ENCODE measurements at regions of chr11 and their contacts with region 1.

Region 1: GRCh38 chr11:6377902-6378639 is 12.2 kb upstream of the SMPD1 start:
- DNase-seq: no peak
- H3K4me3 ChIP-seq: no peak overlapping the region
- CTCF ChIP-seq: no peak

Region 2: GRCh38 chr11:6096427-6096826 is 281.6 kb before region 1 on chr11:
- CTCF ChIA-PET with region 1: no interaction called
- POLR2A ChIA-PET with region 1: no interaction called
- DNase-seq: no peak
- H3K4me3 ChIP-seq: no peak overlapping the region
- CTCF ChIP-seq: no peak

Region 3: GRCh38 chr11:6362873-6363678 is 15.0 kb before region 1 on chr11:
- CTCF ChIA-PET with region 1: interaction called, 164 read pairs
- POLR2A ChIA-PET with region 1: interaction called, 3 read pairs
- DNase-seq: peak; percentile 33
- H3K4me3 ChIP-seq: no peak overlapping the region
- CTCF ChIP-seq: peak; percentile 97

Region 4: GRCh38 chr11:6431861-6432260 is 53.8 kb after region 1 on chr11:
- CTCF ChIA-PET with region 1: interaction called, 701 read pairs
- POLR2A ChIA-PET with region 1: no interaction called
- DNase-seq: peak; percentile 45
- H3K4me3 ChIP-seq: no peak overlapping the region
- CTCF ChIP-seq: no peak

Region 5: DNA sequence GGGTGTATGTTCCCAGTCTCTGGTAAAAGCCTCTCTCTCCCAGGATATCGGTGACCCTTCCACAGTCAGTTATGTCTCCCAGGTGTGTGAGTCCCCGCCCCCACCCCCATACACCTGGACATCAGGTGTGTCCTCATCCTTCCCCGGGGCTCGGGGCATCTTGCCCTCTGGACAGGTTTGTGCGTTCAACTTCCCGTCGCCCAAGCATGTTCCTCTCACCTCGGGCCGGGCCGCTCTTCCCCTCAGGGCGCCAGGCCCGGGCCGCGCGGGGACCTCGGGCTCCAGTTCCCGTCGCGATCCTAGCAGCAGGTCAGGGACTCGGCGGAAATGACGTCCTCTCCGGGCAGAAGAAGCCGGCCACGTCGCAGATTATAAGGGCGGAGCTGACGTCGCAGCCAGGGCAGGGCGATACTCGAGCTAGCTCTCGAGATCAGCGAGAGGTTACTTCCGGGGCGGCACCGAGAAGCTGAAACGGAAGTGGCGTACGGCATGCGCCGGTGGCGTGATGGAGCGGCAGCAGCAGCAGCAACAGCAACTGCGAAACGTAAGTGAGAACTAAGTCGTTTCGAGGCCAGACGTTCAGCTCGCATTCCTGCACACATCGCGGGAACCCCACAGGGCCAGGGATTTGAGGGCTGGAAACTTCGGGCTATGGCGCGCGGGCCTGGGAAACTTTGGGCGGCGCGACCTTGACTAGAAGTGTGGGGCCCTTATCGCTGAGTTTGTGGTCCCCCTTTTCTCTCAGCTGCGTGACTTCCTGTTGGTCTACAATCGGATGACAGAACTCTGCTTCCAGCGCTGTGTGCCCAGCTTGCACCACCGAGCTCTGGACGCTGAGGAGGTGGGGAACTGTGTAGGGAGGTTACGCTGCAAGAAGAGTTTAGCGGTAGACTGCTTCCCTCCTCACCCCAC is 103.2 kb after region 1 on chr11 and contains the starts of genes ARFIP2 and TIMM10B:
- CTCF ChIA-PET with region 1: interaction called, 56 read pairs
- POLR2A ChIA-PET with region 1: interaction called, 4 read pairs
- DNase-seq: peak; percentile 86
- H3K4me3 ChIP-seq: peak within 1 kb of the TSS; percentile 99
- CTCF ChIP-seq: no peak

Region 6: DNA sequence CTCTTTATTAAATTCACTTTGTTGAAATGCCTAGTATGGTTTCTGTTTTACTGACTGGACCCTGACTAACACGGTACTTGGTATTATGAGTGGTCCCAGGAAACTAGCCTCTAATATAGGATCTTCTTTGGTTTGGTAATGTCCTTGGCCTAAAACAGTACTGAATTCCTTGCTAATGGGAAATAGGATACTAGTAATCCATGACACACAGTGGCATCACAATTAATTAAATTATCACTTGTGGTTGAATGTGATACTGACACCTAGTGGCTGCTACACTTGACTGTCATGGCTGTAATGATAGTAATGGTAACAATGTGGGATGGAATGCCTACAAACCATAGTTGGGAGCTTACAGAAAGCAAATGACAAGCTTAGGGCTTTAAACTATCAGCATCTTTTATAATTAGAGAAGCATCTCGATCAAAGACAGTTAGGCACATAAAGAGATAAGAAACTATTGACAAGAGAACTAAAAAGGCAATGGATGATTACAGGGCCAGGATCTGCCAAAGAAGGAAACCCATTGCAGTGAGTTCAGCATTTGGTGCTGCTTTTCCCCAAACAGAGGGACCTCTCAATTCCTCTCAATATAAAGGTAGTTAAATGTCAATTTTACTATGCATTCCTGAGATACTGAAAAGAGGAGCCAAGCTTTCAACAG is 127.6 kb after region 1 on chr11:
- CTCF ChIA-PET with region 1: interaction called, 84 read pairs
- POLR2A ChIA-PET with region 1: interaction called, 3 read pairs
- DNase-seq: peak; percentile 36
- H3K4me3 ChIP-seq: no peak overlapping the region
- CTCF ChIP-seq: peak; percentile 46

Region 7: DNA sequence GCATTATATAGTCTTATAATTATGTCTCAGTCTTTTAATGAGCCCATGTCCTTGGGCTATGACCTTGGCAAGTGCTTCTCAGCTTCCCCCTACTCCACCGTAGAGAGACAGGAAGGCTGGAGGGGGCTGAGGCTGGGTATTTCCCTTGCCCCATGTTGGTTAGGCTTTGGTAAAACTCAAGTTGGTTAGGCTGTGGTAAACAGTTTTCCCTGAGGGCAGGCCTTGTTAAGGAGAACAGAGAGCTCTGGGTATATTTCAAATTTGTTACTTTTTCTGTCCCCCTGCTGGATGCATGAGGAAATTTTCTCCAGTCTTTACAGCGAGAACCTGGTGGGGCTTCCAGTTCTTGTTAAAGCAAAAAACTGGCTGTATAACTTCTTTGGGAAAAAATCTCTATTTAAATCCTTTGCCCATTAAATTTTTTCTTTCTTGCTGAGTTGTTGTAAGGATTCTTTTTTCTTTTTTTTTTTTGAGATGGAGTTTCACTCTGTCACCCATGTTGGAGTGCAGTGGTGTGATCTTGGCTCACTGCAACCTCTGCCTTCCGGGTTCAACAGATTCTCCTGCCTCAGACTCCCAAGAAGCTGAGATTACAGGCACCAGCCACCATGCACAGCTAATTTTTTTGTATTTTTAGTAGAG is 289.8 kb after region 1 on chr11:
- CTCF ChIA-PET with region 1: interaction called, 14 read pairs
- POLR2A ChIA-PET with region 1: no interaction called
- DNase-seq: no peak
- H3K4me3 ChIP-seq: no peak overlapping the region
- CTCF ChIP-seq: peak; percentile 29

Region 8: DNA sequence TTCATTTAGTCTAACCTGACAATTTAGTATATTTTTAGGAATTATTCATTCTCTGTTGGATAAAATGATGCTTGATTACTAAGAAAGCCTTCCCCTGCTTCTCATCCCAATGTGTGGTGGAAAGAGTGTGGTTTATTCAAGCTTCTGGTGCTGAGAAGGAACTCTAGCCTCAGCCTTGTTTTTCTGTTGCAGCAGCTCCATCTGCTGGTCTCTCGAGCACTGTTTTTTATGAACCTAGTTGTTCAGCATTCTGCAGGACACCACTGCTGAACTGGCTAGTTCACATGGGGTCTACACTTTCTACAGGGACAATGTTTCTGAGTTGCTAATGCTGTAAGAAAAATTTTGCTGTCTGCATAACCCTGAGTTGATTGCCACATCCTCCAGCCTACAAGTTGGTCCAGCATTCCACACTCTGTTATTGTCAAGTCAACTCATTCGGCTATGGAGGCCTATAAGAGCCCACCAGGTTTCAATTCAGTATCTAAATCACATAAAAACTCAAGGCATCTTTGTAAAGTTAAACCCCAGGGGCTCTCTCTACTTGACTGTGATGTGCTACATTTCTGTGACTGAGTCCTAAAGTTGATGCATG is 379.4 kb after region 1 on chr11:
- CTCF ChIA-PET with region 1: interaction called, 71 read pairs
- POLR2A ChIA-PET with region 1: no interaction called
- DNase-seq: peak; percentile 12
- H3K4me3 ChIP-seq: no peak overlapping the region
- CTCF ChIP-seq: peak; percentile 62

Measured in AG04449 (cell line).